ENCODE measurements at regions of chr4 and their contacts with region 1.

Region 1: DNA sequence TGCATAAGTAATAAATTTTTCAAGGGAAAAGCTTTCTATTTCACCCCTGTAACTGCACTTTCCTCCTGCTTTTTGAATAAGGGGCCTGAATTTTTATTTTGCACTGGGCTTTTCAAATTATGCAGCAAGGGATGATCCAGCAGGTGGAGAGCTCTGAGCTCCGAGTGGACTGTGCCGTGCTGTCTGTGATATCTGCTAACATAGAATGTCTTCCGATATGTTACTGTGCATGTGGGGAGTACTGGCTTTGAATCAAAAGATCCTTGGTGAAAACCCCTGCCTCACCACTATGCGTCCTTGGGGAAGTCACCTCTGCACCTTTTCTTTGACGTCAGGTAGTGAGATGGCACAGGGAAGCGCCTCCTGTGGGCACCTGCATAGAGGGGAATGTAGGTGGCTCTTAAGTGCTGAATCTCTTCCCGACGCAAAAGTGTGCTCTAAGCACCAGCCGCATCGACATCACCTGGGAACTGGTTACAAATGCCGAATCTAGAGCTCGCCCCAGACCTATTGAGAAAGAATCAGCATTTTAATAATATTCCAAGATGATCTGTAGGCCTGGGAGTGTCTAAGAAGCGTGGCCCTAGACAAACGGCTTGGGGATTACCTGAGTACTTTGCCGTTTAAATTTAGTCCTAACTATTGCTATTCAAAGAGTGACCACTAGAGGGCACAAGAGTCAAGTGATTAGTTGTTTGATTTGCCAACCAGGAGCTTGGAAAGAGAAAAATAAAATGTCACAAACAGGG is 19.2 kb upstream of the WFS1 start:
- H3K4me3 Mint-ChIP-seq: no peak overlapping the region
- H3K27ac Mint-ChIP-seq: no peak overlapping the region
- H3K4me1 Mint-ChIP-seq: no peaks in the 10 kb centered on the region
- H3K27me3 Mint-ChIP-seq: peaks cover 43% of the 10 kb centered on the region

Region 2: GRCh38 chr4:6327041-6327917 is 76.9 kb after region 1 on chr4:
- intact Hi-C with region 1: loop called (anchors 1 kb)
- H3K4me3 Mint-ChIP-seq: no peak overlapping the region
- H3K27ac Mint-ChIP-seq: no peak overlapping the region
- H3K4me1 Mint-ChIP-seq: no peaks in the 10 kb centered on the region
- H3K27me3 Mint-ChIP-seq: peaks cover 48% of the 10 kb centered on the region

Region 3: GRCh38 chr4:6546681-6547447 is 296.5 kb after region 1 on chr4:
- intact Hi-C with region 1: loop called (anchors 10 kb)
- H3K4me3 Mint-ChIP-seq: no peak overlapping the region
- H3K27ac Mint-ChIP-seq: no peak overlapping the region
- H3K4me1 Mint-ChIP-seq: no peaks in the 10 kb centered on the region
- H3K27me3 Mint-ChIP-seq: peaks cover 10% of the 10 kb centered on the region

Measured in dendritic cell treated with granulocyte-macrophage colony-stimulating factor and Interleukin-4, amounts not matched to agents 40 ng/mL and 50 ng/mL, for 4 days (primary cell).